Activated T-helper 2 cell treated with anti-CD3 and anti-CD28 coated beads, Interferon-gamma antibody, Interleukin-2, Interleukin-4, amounts not matched to agents 10 μg/mL and 5 μg/mL and 100 μg/mL, durations not matched to agents 14 hours and 24 hours and 36 hours (primary cell): ENCODE measurements at regions of chr10 and their contacts with region 1.

Region 1: GRCh38 chr10:86755740-86756510 is 494 bp upstream of the BMPR1A start:
- DNase-seq: peak; percentile 84
- H3K4me3 Mint-ChIP-seq: peak overlapping the region; percentile 80
- H3K27ac Mint-ChIP-seq: peak overlapping the region; percentile 67
- H3K4me1 Mint-ChIP-seq: peaks cover 41% of the 10 kb centered on the region
- H3K27me3 Mint-ChIP-seq: peaks cover 43% of the 10 kb centered on the region

Region 2: GRCh38 chr10:86888585-86889381 is 132.9 kb after region 1 on chr10:
- intact Hi-C with region 1: loop called (anchors 2 kb)
- DNase-seq: no peak
- H3K4me3 Mint-ChIP-seq: no peak overlapping the region
- H3K27ac Mint-ChIP-seq: peak overlapping the region; percentile 73
- H3K4me1 Mint-ChIP-seq: peaks cover 13% of the 10 kb centered on the region
- H3K27me3 Mint-ChIP-seq: no peaks in the 10 kb centered on the region